ENCODE measurements at regions of chr1 and their contacts with region 1.

Region 1: GRCh38 chr1:234599617-234600417 is 10.2 kb downstream of the IRF2BP2 start:
- DNase-seq: peak; percentile 93
- ATAC-seq: peak; percentile 90

Region 2: DNA sequence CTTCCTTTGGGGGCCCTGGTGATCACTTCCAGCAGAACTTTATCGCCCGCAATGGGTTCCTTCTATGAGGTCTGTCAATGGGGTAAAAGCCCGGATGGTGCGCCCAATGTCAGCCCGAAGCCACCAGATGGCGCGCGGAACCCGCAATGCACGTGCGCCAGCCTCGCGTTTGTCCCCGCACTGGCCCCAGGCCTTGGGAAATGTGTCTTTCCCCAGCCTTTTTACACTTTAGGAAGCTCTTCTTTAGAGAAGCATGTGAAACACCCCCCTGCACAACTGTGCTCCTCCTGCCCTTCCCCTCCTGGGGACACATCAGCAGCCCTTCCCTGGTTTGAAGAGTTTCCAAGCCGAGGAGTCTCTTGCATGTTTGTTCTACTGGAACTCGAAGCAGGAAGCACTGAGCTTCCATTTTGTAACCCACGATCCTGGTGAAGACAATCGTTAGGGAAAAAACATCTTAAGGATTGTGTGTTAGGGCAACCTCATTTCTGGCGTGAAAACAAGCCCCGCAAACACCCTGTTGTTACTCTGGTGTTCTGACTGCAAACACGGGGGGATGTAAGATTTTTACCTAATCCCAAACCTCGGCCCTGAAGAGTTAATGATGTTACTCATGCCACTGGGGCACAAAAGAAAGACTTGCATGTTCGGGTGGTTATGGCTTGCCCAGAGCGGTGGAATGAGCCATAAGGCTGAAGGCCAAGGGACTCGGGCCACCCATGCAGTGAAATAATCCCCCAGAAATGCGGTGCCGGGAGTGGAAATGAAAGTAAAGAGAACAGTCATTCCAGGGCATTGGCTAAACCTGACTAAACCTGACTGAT is 100.5 kb before region 1 on chr1:
- intact Hi-C with region 1: loop called (anchors 5 kb)
- DNase-seq: peak; percentile 96
- ATAC-seq: peak; percentile 98

Region 3: DNA sequence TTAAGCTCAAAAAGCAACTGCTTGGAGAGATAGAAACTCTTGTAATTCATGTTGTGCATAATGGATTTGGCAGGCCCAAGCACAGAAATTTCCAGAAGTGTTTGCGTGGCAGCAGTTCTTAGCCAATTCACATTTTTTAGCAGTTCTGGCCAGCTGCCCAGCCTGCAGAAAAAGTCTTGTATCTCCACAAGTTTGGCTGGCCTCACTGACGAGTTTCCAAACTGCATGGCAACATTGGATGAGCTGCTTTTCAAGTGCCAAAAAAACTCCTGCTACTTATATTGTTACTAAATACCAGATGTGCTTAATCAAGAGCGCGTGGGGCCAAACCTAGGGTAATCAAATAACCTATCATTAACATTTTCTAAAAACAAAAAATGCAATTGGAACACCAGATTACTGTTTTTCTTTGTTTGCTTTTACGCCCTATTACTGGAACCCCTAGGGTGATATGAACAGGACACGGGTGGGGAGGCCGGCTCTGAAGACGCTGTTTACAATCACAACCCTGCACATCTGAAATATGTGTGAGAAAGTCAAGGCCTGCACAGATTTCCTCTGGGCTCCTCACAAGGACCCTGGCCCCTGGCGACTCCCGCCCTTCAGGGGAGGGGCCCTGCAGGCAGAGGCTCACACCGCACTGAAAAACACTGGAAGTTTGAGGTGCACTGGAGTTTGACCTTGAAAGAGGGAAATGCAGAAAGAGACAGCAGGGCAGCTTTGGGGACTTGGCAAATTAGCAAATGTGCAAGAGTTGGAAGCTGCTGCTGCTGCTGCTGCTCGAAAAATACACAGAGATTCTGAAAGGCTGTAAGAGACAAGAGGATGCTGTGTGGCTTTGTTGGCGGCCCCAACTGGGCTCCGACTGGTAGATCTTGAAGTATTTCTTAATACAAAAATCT is 65.6 kb before region 1 on chr1:
- intact Hi-C with region 1: loop called (anchors 5 kb)
- DNase-seq: peak; percentile 96
- ATAC-seq: peak; percentile 13

Region 4: DNA sequence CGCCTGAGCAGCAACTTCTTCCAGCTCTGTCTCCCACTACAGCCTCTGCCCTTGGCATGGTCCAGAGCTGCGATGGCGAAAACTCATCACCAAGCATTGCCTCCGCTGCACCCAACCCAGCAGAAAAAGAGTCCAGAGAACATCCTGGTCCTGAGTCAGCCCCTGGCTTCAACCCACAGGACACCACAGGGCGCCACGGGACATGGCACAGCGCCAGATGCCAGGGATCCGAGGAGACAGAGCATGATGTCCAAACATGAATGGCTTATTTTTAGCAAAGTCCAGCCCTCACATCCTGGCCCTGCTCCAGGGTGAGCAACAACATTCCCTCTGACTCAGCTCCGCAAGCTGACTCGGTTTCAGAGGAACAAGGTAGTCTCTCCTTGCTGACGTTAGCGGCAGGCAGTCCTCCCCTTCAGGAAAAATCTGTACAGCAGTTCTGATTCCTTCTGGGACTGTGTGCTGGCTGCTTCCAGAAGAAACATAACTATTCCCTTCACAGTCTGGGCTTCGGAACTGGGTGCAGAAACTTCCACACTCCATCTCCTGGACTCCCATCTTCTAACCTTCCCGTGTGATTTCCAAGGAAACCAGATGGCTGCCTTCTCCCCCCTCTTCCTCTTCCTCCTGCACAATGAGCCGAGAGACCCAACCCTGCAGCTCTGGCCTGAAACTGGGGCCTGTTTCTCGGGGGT is 397.5 kb after region 1 on chr1:
- intact Hi-C with region 1: loop called (anchors 10 kb)
- DNase-seq: peak; percentile 98
- ATAC-seq: peak; percentile 94

Measured in Right ventricle myocardium superior (tissue), 1 donor.